SK-N-SH (cell line): ENCODE measurements at regions of chr17 and their contacts with region 1.

Region 1: GRCh38 chr17:69523244-69523861 is 108.9 kb downstream of the MAP2K6 start:
- DNase-seq: peak; percentile 50
- H3K4me3 ChIP-seq: no peak overlapping the region
- H3K27ac ChIP-seq: no peak overlapping the region
- H3K4me1 ChIP-seq: no peaks in the 10 kb centered on the region; a peak in 1 of 4 replicates
- H3K27me3 ChIP-seq: no peaks in the 10 kb centered on the region
- CTCF ChIP-seq: peak; percentile 86
- EP300 ChIP-seq: no peak
- RAD21 ChIP-seq: peak; percentile 90

Region 2: GRCh38 chr17:69246726-69247375 is 276.5 kb before region 1 on chr17:
- CTCF ChIA-PET with region 1: interaction called, 10 read pairs
- POLR2A ChIA-PET with region 1: no interaction called
- DNase-seq: peak; percentile 39
- H3K4me3 ChIP-seq: no peak overlapping the region; a peak in 1 of 4 replicates
- H3K27ac ChIP-seq: no peak overlapping the region
- H3K4me1 ChIP-seq: peaks cover 0 to 4% of the 10 kb centered on the region in 2 experiments; a peak in 1 of 4 replicates
- H3K27me3 ChIP-seq: no peaks in the 10 kb centered on the region
- CTCF ChIP-seq: peak; percentile 95
- EP300 ChIP-seq: no peak
- RAD21 ChIP-seq: peak; percentile 80

Region 3: GRCh38 chr17:69388822-69389442 is 134.4 kb before region 1 on chr17:
- CTCF ChIA-PET with region 1: interaction called, 14 read pairs
- POLR2A ChIA-PET with region 1: no interaction called
- DNase-seq: no peak
- H3K4me3 ChIP-seq: no peak overlapping the region
- H3K27ac ChIP-seq: no peak overlapping the region
- H3K4me1 ChIP-seq: no peaks in the 10 kb centered on the region
- H3K27me3 ChIP-seq: no peaks in the 10 kb centered on the region
- CTCF ChIP-seq: no peak
- EP300 ChIP-seq: no peak
- RAD21 ChIP-seq: no peak

Region 4: GRCh38 chr17:69501591-69502468 is 21.5 kb before region 1 on chr17:
- CTCF ChIA-PET with region 1: interaction called, 91 read pairs
- POLR2A ChIA-PET with region 1: no interaction called
- DNase-seq: no peak
- H3K4me3 ChIP-seq: no peak overlapping the region
- H3K27ac ChIP-seq: no peak overlapping the region
- H3K4me1 ChIP-seq: peaks cover 3 to 10% of the 10 kb centered on the region in 2 experiments; a peak in 2 of 4 replicates
- H3K27me3 ChIP-seq: no peaks in the 10 kb centered on the region
- CTCF ChIP-seq: no peak
- EP300 ChIP-seq: no peak
- RAD21 ChIP-seq: no peak

Region 5: GRCh38 chr17:69539781-69540319 is 16.5 kb after region 1 on chr17:
- CTCF ChIA-PET with region 1: interaction called, 33 read pairs
- POLR2A ChIA-PET with region 1: no interaction called
- DNase-seq: no peak
- H3K4me3 ChIP-seq: peak overlapping the region; percentile 0 to 9; a peak in 3 of 4 replicates
- H3K27ac ChIP-seq: peak overlapping the region; percentile 18 to 86
- H3K4me1 ChIP-seq: peaks cover 0 to 7% of the 10 kb centered on the region in 2 experiments; a peak in 1 of 4 replicates
- H3K27me3 ChIP-seq: no peaks in the 10 kb centered on the region
- CTCF ChIP-seq: no peak
- EP300 ChIP-seq: peak in 1 of 2 experiments; percentile 83; a peak in 2 of 4 replicates
- RAD21 ChIP-seq: no peak

Region 6: DNA sequence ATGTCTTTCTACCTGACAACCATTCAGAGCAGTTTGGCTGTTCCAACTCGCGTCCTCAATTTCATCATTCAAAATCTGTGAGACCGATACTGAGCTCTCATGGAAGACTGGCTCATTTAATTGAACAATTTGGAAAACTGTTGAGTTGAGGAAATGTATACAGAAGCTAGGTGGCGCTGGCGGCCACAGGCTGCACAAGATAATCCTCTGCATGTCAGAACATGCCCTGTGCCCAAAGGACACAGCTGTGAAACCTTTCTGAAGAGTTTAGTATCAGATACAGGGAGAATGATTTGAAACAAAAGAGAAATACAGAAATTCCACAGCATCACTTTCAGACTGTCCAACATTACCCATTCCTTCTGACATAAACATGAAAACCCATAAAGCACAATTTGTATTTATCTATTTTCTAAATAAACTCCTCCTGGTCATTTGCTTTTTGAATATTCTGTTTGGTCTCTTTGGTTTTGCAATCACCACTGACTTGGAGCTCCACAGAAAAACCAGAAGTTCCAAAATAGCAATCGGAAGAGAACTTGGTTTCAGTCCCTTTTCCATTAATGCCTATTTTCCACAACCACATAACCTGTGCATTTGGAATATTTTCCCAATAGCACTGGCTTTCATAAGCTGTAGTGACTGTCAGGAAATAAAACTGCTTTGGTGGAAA is 83.9 kb after region 1 on chr17:
- CTCF ChIA-PET with region 1: interaction called, 18 read pairs
- POLR2A ChIA-PET with region 1: no interaction called
- DNase-seq: peak; percentile 62
- H3K4me3 ChIP-seq: no peak overlapping the region; a peak in 1 of 4 replicates
- H3K27ac ChIP-seq: peak overlapping the region; percentile 96 to 99
- H3K4me1 ChIP-seq: peaks cover 23 to 30% of the 10 kb centered on the region in 2 experiments
- H3K27me3 ChIP-seq: no peaks in the 10 kb centered on the region
- CTCF ChIP-seq: peak; percentile 100
- EP300 ChIP-seq: peak; percentile 42 to 69; a peak in 1 of 4 replicates
- RAD21 ChIP-seq: peak; percentile 95